HepG2 (cell line): ENCODE measurements at regions of chr5 and their contacts with region 1.

Region 1: GRCh38 chr5:10130881-10131280 is 118.8 kb downstream of the ATPSCKMT start:
- DNase-seq: no peak
- ATAC-seq: no peak
- H3K4me3 ChIP-seq: no peak overlapping the region
- H3K27ac ChIP-seq: no peak overlapping the region
- H3K4me1 ChIP-seq: no peaks in the 10 kb centered on the region
- H3K27me3 ChIP-seq: no peaks in the 10 kb centered on the region
- CTCF ChIP-seq: no peak
- EP300 ChIP-seq: no peak
- POLR2A ChIP-seq: no peak
- RAD21 ChIP-seq: no peak

Region 2: DNA sequence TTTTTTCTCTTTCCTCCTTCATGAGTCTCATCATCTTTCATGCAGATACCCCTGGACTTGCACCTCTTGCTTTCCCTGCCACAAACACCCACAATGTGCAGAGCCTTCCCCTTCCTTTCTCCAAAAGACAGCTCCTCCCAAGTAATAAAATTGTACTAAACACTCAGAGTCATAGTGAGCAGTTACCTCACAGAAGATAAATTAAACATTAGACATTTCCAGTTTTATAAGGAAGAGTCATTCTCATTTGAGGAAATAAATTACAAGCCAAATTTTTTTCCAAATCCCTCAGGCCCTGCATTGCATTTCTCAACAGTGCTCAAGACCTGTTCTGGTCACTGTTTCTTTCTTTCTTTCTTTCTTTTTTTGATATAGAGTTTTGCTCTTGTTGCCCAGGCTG is 12.7 kb before region 1 on chr5:
- CTCF ChIA-PET with region 1: no interaction called
- POLR2A ChIA-PET with region 1: no interaction called
- in situ Hi-C with region 1: no loop called
- intact Hi-C with region 1: no loop called
- DNase-seq: no peak
- ATAC-seq: no peak
- H3K4me3 ChIP-seq: no peak overlapping the region
- H3K27ac ChIP-seq: no peak overlapping the region
- H3K4me1 ChIP-seq: no peaks in the 10 kb centered on the region
- H3K27me3 ChIP-seq: no peaks in the 10 kb centered on the region; a peak in 1 of 5 replicates
- CTCF ChIP-seq: no peak
- EP300 ChIP-seq: no peak
- POLR2A ChIP-seq: no peak
- RAD21 ChIP-seq: no peak

Region 3: GRCh38 chr5:10201223-10201868 is 70.5 kb after region 1 on chr5:
- CTCF ChIA-PET with region 1: no interaction called
- POLR2A ChIA-PET with region 1: no interaction called
- in situ Hi-C with region 1: no loop called
- intact Hi-C with region 1: loop called (anchors 2 kb)
- DNase-seq: no peak
- ATAC-seq: no peak
- H3K4me3 ChIP-seq: no peak overlapping the region
- H3K27ac ChIP-seq: no peak overlapping the region
- H3K4me1 ChIP-seq: no peaks in the 10 kb centered on the region
- H3K27me3 ChIP-seq: no peaks in the 10 kb centered on the region
- CTCF ChIP-seq: peak; percentile 33; the same call in 1 of the 2 replicates
- EP300 ChIP-seq: no peak
- POLR2A ChIP-seq: no peak
- RAD21 ChIP-seq: no peak

Region 4: DNA sequence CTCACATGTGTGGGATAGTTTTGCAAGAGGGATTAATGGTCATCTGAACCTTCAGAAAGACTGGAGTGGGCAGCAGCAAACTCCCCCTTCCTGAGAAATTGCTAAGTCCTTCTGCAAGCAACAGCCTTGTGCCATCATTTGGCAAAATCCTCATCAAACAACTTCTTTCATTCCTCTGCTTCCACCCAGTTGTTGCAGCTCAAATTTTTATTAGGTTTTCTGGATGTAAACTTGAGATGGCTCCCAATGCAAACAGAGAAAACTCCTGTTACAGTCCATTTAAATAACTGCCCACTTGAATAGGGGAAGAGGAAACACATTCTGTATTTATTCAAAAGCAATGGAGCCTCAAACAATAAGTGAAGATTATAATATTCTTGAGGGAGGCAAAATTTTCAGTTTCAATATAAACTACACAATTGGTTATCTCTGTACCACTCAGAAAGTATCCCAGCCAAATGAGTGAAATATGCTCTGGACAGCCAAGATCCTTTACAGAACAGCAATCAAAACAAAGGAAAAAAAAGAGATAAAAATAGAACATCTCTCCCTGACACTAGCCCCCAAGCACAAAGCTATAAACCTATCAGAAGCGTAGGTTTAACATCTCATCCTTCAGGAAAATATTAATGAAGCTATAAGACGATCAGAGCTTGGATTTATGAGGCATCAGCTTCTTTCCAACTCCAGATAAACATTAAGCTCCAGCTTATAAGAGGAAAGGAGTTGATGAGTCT is 647.5 kb after region 1 on chr5:
- CTCF ChIA-PET with region 1: no interaction called
- POLR2A ChIA-PET with region 1: no interaction called
- in situ Hi-C with region 1: no loop called
- intact Hi-C with region 1: no loop called
- DNase-seq: no peak
- ATAC-seq: no peak
- H3K4me3 ChIP-seq: no peak overlapping the region
- H3K27ac ChIP-seq: no peak overlapping the region
- H3K4me1 ChIP-seq: no peaks in the 10 kb centered on the region
- H3K27me3 ChIP-seq: no peaks in the 10 kb centered on the region
- CTCF ChIP-seq: no peak
- EP300 ChIP-seq: no peak
- POLR2A ChIP-seq: no peak
- RAD21 ChIP-seq: no peak